Transverse colon (tissue), 4 donors: ENCODE measurements at regions of chr3 and their contacts with region 1.

Region 1: DNA sequence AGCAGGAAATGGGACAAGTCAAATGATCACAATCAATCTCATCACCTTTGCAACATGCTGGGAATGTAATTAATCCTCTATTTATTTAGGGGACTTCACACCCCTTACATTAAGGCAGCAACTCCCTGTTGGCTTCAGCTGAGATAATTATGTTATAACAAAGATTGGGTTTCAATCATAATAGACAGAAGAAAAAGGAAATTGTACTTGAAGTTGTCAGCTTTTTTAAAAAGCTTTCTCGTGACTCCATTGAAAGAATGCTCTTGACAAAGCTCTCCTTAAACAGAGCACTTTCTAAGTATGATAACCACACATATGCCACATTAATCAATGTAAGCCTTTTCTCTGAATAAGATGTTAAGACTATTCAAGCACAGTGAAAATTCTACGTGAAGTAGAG is 65.7 kb downstream of the SHQ1 start:
- DNase-seq: no peak
- H3K4me3 ChIP-seq: no peak overlapping the region
- H3K27ac ChIP-seq: no peak overlapping the region
- H3K4me1 ChIP-seq: no peaks in the 10 kb centered on the region
- H3K27me3 ChIP-seq: no peaks in the 10 kb centered on the region
- CTCF ChIP-seq: no peak
- EP300 ChIP-seq: no peak
- POLR2A ChIP-seq: no peak

Region 2: DNA sequence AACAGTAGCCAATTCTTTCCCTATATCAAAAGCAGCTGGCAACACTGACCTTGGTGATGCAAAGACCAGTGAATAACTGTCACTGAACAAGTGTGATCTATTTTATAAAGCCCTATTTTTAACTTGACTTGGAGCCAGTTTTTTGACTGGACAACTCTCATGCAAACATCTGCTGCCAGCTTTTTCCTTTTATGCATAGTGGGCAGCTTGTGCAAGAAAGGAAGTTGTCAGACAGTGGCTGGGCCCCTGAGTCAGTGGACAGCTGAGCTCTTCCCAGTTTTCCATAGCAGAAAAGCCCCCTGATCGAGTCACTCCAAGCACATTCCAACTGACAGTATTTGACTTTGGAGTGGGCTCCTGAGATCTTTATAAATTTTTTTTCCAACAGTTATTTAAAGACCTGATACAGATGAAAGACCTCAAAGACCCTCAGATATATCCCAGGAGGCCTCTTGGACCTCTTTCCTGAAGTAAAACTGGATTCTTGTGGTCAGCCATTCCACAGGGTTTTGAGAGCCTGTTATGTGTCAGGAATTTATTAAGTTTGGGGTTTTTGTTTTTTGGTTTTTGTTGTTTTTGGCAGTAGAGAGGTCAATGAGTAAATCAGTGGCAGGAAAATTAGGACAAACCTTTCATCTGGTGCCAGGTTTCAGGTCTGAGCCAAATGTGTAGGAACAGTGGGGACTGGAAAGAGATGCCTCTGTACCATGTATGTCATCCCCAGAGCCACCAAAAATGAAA is 1949.9 kb before region 1 on chr3:
- in situ Hi-C with region 1: no loop called
- intact Hi-C with region 1: loop called (anchors 10 kb)
- DNase-seq: no peak
- H3K4me3 ChIP-seq: no peak overlapping the region
- H3K27ac ChIP-seq: peak overlapping the region in 2 of 4 donors; percentile 7 to 37
- H3K4me1 ChIP-seq: no peaks in the 10 kb centered on the region
- H3K27me3 ChIP-seq: no peaks in the 10 kb centered on the region
- CTCF ChIP-seq: no peak
- EP300 ChIP-seq: no peak
- POLR2A ChIP-seq: no peak

Region 3: GRCh38 chr3:72482589-72483321 is 299.8 kb before region 1 on chr3:
- in situ Hi-C with region 1: no loop called
- intact Hi-C with region 1: no loop called
- DNase-seq: peak; percentile 74
- H3K4me3 ChIP-seq: peak overlapping the region in 3 of 4 donors; percentile 2 to 32 (median 19)
- H3K27ac ChIP-seq: peak overlapping the region; percentile 21 to 47 (median 43)
- H3K4me1 ChIP-seq: peaks cover 5 to 24% (median 16%) of the 10 kb centered on the region in 4 donors
- H3K27me3 ChIP-seq: no peaks in the 10 kb centered on the region
- CTCF ChIP-seq: no peak
- EP300 ChIP-seq: no peak
- POLR2A ChIP-seq: no peak

Region 4: DNA sequence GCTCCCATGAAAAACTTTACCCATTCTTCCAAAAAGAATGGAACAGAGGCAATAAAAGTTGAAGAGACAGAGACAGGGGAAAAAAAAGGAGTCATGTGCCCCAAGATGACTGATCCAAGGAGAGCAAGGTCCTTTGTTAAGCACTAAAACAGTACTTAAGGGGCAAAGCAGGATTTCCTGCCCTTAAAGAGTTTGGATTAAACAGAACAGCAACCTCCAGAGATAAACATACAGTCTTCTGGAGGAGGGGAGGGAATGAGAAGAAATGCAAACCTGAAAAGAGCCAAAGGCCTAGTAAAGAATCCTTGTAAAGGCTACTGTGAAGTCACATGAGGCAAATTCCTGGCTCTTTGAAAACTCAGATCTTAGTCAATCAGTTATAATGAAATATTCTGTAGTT is 27.5 kb after region 1 on chr3:
- in situ Hi-C with region 1: no loop called
- intact Hi-C with region 1: no loop called
- DNase-seq: no peak
- H3K4me3 ChIP-seq: no peak overlapping the region
- H3K27ac ChIP-seq: no peak overlapping the region
- H3K4me1 ChIP-seq: peaks cover 0 to 6% (median 3%) of the 10 kb centered on the region in 4 donors
- H3K27me3 ChIP-seq: no peaks in the 10 kb centered on the region
- CTCF ChIP-seq: no peak
- EP300 ChIP-seq: no peak
- POLR2A ChIP-seq: no peak

Region 5: DNA sequence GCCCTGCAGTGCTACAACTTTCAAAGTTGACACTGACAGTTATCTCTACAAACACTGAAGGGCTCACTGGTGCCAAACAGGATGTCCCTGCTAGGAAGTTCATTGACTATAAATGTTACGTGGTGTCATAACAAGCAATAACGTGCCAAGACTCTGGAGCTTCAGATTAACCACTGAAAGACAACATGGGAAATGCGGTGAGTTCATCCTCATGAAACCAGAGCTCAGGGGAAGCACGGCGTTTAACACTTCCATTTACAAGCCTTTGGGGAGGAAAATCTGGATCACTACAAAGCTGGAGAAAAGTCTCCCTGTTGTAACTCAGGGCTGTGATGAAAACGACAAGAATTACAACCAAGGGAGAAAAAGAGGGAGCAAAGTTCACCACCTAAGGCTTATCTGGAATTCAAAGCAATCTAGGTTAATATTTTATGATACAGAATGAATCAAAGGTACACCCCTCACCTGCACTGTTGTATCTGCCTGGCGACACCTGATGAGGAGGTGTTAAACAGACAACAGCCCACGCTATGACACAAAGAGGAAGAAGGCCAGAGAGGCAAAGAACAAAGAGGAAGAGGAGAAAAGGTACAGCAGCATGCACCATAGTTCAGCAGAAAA is 38.8 kb after region 1 on chr3:
- in situ Hi-C with region 1: no loop called
- intact Hi-C with region 1: no loop called
- DNase-seq: peak; percentile 64
- H3K4me3 ChIP-seq: peak overlapping the region in 1 of 4 donors; percentile 6
- H3K27ac ChIP-seq: peak overlapping the region; percentile 68 to 75 (median 74)
- H3K4me1 ChIP-seq: peaks cover 17 to 35% (median 25%) of the 10 kb centered on the region in 4 donors
- H3K27me3 ChIP-seq: no peaks in the 10 kb centered on the region
- CTCF ChIP-seq: no peak
- EP300 ChIP-seq: no peak
- POLR2A ChIP-seq: no peak

Region 6: DNA sequence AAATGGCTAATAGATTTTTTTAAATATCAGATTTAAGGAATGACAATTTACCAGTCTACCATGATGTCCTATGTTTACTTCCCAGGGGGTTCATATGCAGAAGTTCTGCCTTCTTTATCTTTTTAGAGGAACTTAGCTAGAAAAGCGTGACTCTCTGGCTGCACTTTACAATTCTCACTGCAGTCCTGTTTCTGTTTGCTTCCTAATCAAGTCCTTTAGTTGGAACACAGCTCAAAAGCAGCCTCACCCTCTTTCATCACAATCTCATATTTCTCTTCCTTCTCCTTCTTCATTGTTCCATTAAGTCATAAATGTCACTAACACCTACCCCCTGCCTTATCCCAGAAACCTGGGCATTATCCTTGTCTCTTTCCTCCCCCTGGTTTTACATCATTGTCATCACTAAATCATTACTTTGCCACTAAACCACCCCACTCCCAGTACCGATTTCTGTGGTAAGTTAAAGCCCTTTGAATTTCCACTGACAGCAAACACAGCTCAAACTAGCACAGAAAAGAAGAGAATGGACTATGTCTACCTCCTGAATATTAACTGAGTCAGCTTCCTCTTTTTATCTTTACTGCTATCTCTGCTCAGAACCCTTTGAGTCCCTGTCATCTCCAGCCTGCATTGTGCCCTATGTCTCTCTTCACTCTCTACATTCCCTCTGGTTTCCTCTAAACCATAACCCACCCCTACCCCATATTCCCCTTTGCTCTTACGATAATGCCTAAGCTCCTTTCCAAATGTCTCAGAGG is 200.3 kb after region 1 on chr3:
- in situ Hi-C with region 1: no loop called
- intact Hi-C with region 1: no loop called
- DNase-seq: no peak
- H3K4me3 ChIP-seq: no peak overlapping the region
- H3K27ac ChIP-seq: no peak overlapping the region
- H3K4me1 ChIP-seq: no peaks in the 10 kb centered on the region
- H3K27me3 ChIP-seq: no peaks in the 10 kb centered on the region
- CTCF ChIP-seq: no peak
- EP300 ChIP-seq: no peak
- POLR2A ChIP-seq: no peak